Activated CD4-positive, alpha-beta T cell treated with anti-CD3 and anti-CD28 coated beads for 36 hours (primary cell): ENCODE measurements at regions of chr22 and their contacts with region 1.

Region 1: GRCh38 chr22:17213976-17214375 is 5.3 kb downstream of the ADA2 start:
- DNase-seq: peak; percentile 74
- ATAC-seq: peak; percentile 49
- H3K4me3 Mint-ChIP-seq: no peak overlapping the region
- H3K27ac Mint-ChIP-seq: no peak overlapping the region
- H3K4me1 Mint-ChIP-seq: peaks cover 46% of the 10 kb centered on the region
- H3K27me3 Mint-ChIP-seq: no peaks in the 10 kb centered on the region

Region 2: DNA sequence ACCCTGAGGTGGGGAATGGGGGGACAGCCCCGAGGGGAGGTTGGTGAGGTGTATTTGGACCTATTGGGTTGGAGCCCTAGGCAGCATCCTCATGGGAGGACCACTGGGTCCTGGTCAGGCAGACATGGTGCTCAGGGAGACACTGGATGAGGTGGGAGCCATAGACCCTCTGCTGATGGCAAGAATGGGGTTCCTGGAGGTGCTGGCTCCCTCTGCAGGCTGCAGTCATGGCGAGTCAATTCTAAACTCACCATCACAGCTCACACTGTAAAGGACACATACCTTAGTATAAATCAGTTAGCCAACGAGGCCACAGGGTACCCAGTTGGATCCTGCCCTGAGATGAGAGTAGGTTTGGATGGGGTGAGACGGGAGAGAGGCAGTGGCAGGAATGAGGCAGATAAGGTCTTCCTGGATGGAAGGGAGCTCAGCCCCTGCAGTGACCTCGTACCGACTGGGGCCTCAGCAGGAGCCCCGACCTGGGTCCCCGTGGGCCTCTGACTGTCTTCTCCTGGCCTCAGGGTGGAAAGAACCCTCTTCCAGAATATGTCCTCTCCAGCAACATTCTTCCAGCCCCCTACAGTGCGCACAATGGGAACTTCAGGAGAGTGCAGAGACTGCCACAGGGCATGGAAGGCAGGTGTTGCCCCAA is 204.2 kb before region 1 on chr22:
- CTCF ChIA-PET with region 1: no interaction called
- POLR2A ChIA-PET with region 1: no interaction called
- intact Hi-C with region 1: no loop called
- DNase-seq: no peak
- ATAC-seq: no peak
- H3K4me3 Mint-ChIP-seq: no peak overlapping the region
- H3K27ac Mint-ChIP-seq: no peak overlapping the region
- H3K4me1 Mint-ChIP-seq: no peaks in the 10 kb centered on the region
- H3K27me3 Mint-ChIP-seq: peaks cover 39% of the 10 kb centered on the region

Region 3: GRCh38 chr22:17237038-17237668 is 23.2 kb after region 1 on chr22:
- CTCF ChIA-PET with region 1: interaction called, 3 read pairs
- POLR2A ChIA-PET with region 1: no interaction called
- intact Hi-C with region 1: loop called in 1 of 2 experiments (anchors 2 kb)
- DNase-seq: peak; percentile 35
- ATAC-seq: peak; percentile 91
- H3K4me3 Mint-ChIP-seq: peak overlapping the region; percentile 29
- H3K27ac Mint-ChIP-seq: peak overlapping the region; percentile 80
- H3K4me1 Mint-ChIP-seq: peaks cover 12% of the 10 kb centered on the region
- H3K27me3 Mint-ChIP-seq: no peaks in the 10 kb centered on the region

Region 4: DNA sequence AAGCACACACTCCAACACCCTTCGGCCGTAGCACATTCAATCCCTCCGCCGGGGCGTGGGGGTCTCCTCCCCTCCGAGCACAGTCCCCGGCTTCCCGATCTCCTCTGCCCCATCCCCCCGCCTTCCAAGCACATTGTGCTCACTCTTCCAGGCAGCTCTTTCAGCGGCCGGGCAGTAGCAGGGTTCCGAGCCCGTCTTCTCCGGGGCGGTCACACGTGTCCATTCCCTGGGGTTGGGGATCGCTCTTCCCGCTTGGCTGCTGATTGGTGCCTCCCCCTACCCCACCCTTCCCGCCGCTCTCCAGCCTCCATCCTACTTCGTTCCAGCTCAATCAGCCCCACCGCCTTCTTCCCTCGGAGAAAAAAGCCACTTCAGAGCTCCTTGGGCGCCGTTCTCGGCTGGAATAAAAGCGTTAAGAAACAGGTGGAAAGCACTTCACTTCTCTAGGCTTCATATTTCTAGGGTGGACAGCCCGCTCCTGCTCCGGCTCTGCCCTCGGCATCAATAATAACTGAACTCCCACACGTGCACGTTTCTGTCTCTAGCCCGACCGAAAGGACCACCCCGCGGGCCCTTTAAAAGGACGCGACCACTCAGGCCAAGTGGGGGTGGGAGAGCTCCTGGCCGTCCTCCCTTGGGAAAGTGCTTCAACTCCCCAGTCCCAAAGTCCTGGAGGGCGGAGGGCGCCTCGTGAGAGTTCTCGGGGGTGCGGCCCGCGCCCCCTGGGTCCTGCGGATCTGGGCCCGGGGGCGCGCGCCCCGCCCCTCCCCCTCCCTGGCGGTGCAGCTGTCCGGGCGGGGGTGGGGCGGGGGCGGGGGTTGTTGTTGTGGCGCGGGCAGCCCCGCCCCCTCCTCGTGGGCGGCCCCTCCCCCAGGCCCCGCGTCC is 154.8 kb after region 1 on chr22:
- CTCF ChIA-PET with region 1: no interaction called
- POLR2A ChIA-PET with region 1: no interaction called
- intact Hi-C with region 1: loop called in 1 of 2 experiments (anchors 5 kb)
- DNase-seq: no peak
- ATAC-seq: peak; percentile 16
- H3K4me3 Mint-ChIP-seq: peak overlapping the region; percentile 22
- H3K27ac Mint-ChIP-seq: no peak overlapping the region
- H3K4me1 Mint-ChIP-seq: peaks cover 23% of the 10 kb centered on the region
- H3K27me3 Mint-ChIP-seq: peaks cover 52% of the 10 kb centered on the region

Region 5: DNA sequence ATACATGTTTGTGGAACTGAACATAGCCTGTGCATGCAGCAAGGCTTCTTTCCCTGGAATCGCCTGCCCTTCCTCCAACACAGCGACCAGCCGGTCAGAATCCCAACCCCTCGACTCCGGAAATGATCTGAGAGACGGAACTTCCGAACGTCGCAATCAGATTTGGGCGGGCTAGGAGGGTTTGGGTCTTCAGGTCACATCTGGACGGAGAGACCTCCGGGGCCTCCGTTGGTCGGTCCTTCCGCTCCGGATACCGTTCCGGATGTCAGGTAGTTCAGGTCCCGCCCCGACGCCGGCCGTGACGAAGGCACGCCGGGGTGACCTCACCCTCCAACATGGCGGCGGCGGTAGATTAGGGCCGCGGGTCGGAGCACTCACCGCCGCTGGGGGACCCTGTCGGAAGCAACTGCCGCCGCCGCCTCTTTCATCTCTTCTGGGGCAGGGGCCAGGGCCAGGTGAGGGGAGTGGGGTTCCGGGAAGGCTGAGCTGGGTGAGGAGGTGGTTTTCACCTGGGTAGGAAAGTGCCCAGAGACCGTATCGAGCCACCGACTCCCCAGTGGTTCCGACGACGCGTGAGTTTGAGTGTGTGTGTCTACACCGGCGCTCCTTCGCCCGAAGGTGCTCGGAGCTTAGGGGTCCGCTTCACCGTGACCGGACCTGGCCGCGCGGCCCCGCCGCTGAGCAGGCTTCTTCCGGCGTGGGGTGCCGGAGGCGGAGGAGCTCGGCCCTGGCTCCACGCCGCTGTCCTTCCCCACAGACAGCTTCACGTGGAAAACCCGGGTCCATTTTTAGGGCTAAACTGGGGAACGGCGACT is 424.7 kb after region 1 on chr22 and contains the start of gene BCL2L13:
- CTCF ChIA-PET with region 1: no interaction called
- POLR2A ChIA-PET with region 1: no interaction called
- intact Hi-C with region 1: loop called in 1 of 2 experiments (anchors 5 kb)
- DNase-seq: peak; percentile 94
- ATAC-seq: peak; percentile 96
- H3K4me3 Mint-ChIP-seq: peak within 1 kb of the TSS; percentile 88
- H3K27ac Mint-ChIP-seq: peak within 1 kb of the TSS; percentile 95
- H3K4me1 Mint-ChIP-seq: peaks cover 24% of the 10 kb centered on the region
- H3K27me3 Mint-ChIP-seq: no peaks in the 10 kb centered on the region
- total RNA-seq, gene BCL2L13: 34.1 to 34.5 TPM